ENCODE measurements at regions of chr11 and their contacts with region 1.

Region 1: GRCh38 chr11:83819933-83820549 is 533.9 kb upstream of the CCDC90B start:
- DNase-seq: no peak
- H3K4me3 Mint-ChIP-seq: no peak overlapping the region
- H3K27ac Mint-ChIP-seq: no peak overlapping the region
- H3K4me1 Mint-ChIP-seq: no peaks in the 10 kb centered on the region
- H3K27me3 Mint-ChIP-seq: peaks cover 2% of the 10 kb centered on the region

Region 2: DNA sequence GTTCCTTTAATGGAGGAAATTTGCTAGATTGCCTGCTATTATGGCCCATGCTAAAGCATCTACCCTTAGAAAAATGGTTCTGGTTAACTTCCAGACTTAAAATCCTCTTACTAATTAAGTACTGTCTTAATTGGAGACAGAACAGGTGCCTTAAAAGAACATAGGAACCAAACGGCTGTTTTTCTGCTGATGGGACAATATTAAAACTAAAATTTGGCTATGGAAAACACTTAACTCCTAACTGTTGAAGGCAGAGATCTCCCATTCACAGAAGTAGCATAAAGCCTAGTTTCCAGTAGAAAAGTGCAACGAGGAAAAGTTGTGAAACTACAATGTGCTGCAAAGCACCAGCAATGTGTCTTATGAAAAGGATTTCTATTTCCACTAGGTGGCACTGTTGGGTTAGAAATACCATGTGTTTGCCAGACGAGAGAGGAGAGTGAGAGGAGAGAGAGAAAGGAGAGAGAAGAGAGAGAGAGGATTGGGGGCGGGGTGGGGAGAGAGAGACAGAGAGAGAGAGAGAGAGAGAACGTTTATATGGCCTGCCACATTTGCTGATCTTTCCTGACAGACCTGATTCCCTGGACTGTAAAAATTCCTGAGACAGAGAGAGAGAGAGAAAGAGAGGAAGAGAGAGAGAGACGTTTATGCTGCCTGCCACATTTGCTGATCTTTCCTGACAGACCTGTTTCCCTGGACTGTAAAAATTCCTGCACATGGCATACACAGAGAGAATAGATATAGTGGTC is 1137.9 kb before region 1 on chr11:
- intact Hi-C with region 1: loop called (anchors 10 kb)
- DNase-seq: no peak
- H3K4me3 Mint-ChIP-seq: no peak overlapping the region
- H3K27ac Mint-ChIP-seq: no peak overlapping the region
- H3K4me1 Mint-ChIP-seq: no peaks in the 10 kb centered on the region
- H3K27me3 Mint-ChIP-seq: peaks cover 4% of the 10 kb centered on the region

Region 3: DNA sequence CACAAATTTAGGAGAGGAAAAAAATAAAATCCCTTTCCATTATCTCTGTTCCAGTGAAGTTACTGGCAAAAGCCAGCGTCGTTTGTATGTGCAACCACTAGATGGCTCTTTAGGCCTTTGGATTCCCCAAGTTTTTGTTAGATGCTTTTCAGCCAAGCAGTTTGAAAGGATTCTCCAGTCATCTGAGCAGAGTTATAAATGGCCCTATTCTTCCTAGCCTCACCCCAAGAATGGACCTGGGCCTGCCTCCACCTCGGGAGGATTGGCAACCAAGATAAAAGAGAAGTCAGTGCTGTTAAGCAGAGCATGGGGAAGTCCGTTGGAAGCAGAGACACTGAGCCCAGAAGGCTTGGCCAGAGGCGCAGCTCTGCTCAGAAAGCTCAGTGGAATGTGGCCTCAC is 1101.7 kb before region 1 on chr11:
- intact Hi-C with region 1: loop called (anchors 1 kb)
- DNase-seq: no peak
- H3K4me3 Mint-ChIP-seq: no peak overlapping the region
- H3K27ac Mint-ChIP-seq: no peak overlapping the region
- H3K4me1 Mint-ChIP-seq: no peaks in the 10 kb centered on the region
- H3K27me3 Mint-ChIP-seq: peaks cover 5% of the 10 kb centered on the region

Region 4: GRCh38 chr11:82775736-82776346 is 1044.2 kb before region 1 on chr11:
- intact Hi-C with region 1: loop called (anchors 1 kb)
- DNase-seq: peak; percentile 21
- H3K4me3 Mint-ChIP-seq: no peak overlapping the region
- H3K27ac Mint-ChIP-seq: no peak overlapping the region
- H3K4me1 Mint-ChIP-seq: peaks cover 4% of the 10 kb centered on the region
- H3K27me3 Mint-ChIP-seq: peaks cover 24% of the 10 kb centered on the region

Region 5: DNA sequence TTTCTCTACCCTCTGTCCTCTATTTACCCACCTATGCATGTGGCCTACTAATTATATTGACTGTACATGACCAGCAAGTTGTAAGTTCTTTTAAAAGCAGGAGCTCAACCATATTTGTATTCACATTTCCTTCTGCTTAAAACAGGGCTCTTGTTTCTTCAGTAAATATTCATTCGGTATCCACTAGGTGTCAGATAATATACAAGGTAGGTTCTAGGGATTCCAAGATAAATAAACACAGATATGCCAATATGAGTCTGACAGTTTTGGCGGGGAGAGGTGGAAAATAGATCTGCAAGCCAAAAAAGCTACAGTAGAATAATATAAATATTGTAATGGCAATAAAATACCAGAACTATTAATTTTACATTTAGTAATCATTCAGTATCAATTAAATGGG is 733.0 kb before region 1 on chr11:
- intact Hi-C with region 1: no loop called
- DNase-seq: no peak
- H3K4me3 Mint-ChIP-seq: no peak overlapping the region
- H3K27ac Mint-ChIP-seq: no peak overlapping the region
- H3K4me1 Mint-ChIP-seq: no peaks in the 10 kb centered on the region
- H3K27me3 Mint-ChIP-seq: no peaks in the 10 kb centered on the region

Region 6: GRCh38 chr11:83292709-83293456 is 527.2 kb before region 1 on chr11:
- intact Hi-C with region 1: loop called (anchors 1 kb)
- DNase-seq: peak; percentile 25
- H3K4me3 Mint-ChIP-seq: peak overlapping the region; percentile 55
- H3K27ac Mint-ChIP-seq: no peak overlapping the region
- H3K4me1 Mint-ChIP-seq: peaks cover 5% of the 10 kb centered on the region
- H3K27me3 Mint-ChIP-seq: peaks cover 13% of the 10 kb centered on the region

Measured in activated T-helper 1 cell treated with anti-CD3 and anti-CD28 coated beads, Interleukin-12 subunit alpha, Interleukin-12 subunit beta, Interleukin-2, Interleukin-4 antibody, amounts not matched to agents 30 ng/mL and 10 ng/mL and 1 ng/mL, durations not matched to agents 14 hours and 24 hours and 36 hours (primary cell).